ENCODE measurements at regions of chr10 and their contacts with region 1.

Region 1: DNA sequence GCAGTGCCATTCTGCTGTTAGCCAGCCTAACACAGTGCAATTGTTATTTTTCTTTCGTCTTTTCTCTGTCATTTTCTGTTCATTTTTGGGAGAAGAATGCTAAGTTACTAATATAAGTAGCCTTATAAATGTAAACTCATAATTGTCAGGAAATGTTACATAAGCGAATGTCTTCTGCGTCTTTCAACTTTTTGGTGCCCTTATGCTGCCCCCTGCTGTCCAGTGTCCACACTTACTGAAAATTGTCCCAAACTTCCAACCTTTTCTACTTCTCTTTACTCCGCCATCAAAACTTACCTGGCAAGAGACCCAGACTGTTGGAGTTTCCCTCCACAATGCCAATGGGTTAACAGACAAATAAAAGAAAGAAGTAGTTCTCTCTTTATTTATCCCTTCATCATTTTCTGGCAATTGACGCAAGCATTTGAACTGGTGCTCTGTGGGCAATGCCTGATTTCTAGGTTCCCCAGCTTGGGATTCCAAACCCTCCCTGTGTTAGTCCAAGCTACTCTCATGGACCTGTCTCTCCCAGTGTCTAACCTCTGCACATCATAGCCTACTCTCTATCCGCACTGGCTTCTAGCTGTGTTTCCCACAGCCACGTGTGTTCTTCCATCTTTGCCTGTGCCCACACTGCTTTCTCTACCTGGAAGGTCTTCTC is 21.0 kb upstream of the EPC1 start:
- DNase-seq: no peak
- H3K4me3 ChIP-seq: no peak overlapping the region
- CTCF ChIP-seq: peak; percentile 67

Region 2: GRCh38 chr10:32357056-32357735 is 10.7 kb before region 1 on chr10:
- CTCF ChIA-PET with region 1: interaction called, 37 read pairs
- POLR2A ChIA-PET with region 1: no interaction called
- DNase-seq: no peak
- H3K4me3 ChIP-seq: no peak overlapping the region
- CTCF ChIP-seq: no peak

Region 3: GRCh38 chr10:32378363-32379317 is 10.7 kb after region 1 on chr10:
- CTCF ChIA-PET with region 1: interaction called, 28 read pairs
- POLR2A ChIA-PET with region 1: no interaction called
- DNase-seq: peak; percentile 41
- H3K4me3 ChIP-seq: peak overlapping the region; percentile 73
- CTCF ChIP-seq: no peak

Region 4: GRCh38 chr10:32600317-32600716 is 232.4 kb after region 1 on chr10:
- CTCF ChIA-PET with region 1: no interaction called
- POLR2A ChIA-PET with region 1: no interaction called
- DNase-seq: no peak
- H3K4me3 ChIP-seq: no peak overlapping the region
- CTCF ChIP-seq: no peak

Measured in AG04449 (cell line).